CD8-positive, alpha-beta memory T cell (primary cell): ENCODE measurements at regions of chr3 and their contacts with region 1.

Region 1: GRCh38 chr3:128095222-128095703 is 28.3 kb downstream of the RUVBL1 start:
- DNase-seq: peak; percentile 67 to 83 (median 71)
- H3K4me3 ChIP-seq: no peak overlapping the region
- H3K4me3 Mint-ChIP-seq: no peak overlapping the region
- H3K27ac ChIP-seq: no peak overlapping the region
- H3K27ac Mint-ChIP-seq: peak overlapping the region in 5 of 8 donors; percentile 26 to 81 (median 74)
- H3K4me1 ChIP-seq: no peaks in the 10 kb centered on the region
- H3K4me1 Mint-ChIP-seq: peaks cover 5 to 10% (median 9%) of the 10 kb centered on the region in 3 donors
- H3K27me3 ChIP-seq: no peaks in the 10 kb centered on the region
- H3K27me3 Mint-ChIP-seq: no peaks in the 10 kb centered on the region

Region 2: GRCh38 chr3:128112357-128112968 is 17.2 kb after region 1 on chr3:
- CTCF ChIA-PET with region 1: interaction called, 15 read pairs
- POLR2A ChIA-PET with region 1: interaction called, 3 read pairs
- DNase-seq: peak; percentile 23 to 70 (median 49)
- H3K4me3 ChIP-seq: no peak overlapping the region
- H3K4me3 Mint-ChIP-seq: peak overlapping the region; percentile 31 to 88 (median 72)
- H3K27ac ChIP-seq: peak overlapping the region; percentile 60
- H3K27ac Mint-ChIP-seq: peak overlapping the region; percentile 92 to 99 (median 97)
- H3K4me1 ChIP-seq: peaks cover 33% of the 10 kb centered on the region
- H3K4me1 Mint-ChIP-seq: peaks cover 40 to 54% (median 52%) of the 10 kb centered on the region in 3 donors
- H3K27me3 ChIP-seq: no peaks in the 10 kb centered on the region
- H3K27me3 Mint-ChIP-seq: no peaks in the 10 kb centered on the region

Region 3: DNA sequence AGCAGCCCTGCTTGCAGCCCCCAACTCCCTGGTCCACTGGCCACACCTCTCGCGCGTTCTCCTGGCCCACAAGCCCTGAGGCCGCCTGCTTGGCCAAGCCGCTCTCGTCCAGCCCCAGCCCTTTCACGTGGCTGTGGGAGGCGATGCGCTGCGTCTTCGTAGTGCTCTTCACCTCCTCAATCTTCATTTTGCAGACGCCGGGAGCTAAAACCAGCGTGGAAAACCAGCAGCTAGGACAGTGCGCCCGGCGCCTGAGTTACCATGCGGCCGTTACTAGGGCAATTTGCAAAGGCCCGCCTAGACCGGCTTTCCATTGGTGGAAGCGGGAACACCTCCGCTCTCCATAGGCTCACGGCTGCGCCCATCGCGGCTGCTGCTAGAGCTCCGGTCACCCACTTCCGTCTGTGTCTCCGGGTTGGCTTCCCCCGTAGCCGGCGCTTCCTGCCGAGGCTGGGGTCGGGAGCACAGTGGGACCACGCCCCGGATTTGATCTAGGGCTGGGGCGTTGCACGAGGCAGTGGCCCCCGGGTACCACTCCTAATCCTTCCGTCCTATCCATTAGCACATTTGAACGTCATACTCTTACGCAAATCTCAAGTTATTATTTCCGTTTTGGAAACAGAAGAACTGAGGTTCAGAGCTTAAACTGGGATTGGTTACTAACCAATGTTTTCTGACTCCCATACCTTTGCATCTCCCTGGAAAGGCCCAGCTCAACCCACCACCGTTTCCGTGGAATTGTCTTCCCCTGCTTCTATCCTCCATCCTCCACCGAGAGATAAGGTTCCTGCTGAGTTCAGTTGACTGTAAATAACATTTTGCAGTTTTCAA is 28.5 kb after region 1 on chr3 and contains the start of gene RUVBL1:
- CTCF ChIA-PET with region 1: interaction called, 15 read pairs
- POLR2A ChIA-PET with region 1: no interaction called
- DNase-seq: peak; percentile 95 to 98 (median 97)
- H3K4me3 ChIP-seq: peak within 1 kb of the TSS; percentile 86
- H3K4me3 Mint-ChIP-seq: peak within 1 kb of the TSS; percentile 94 to 99 (median 97)
- H3K27ac ChIP-seq: peak within 1 kb of the TSS; percentile 75
- H3K27ac Mint-ChIP-seq: peak within 1 kb of the TSS; percentile 83 to 99 (median 96)
- H3K4me1 ChIP-seq: peaks cover 19% of the 10 kb centered on the region
- H3K4me1 Mint-ChIP-seq: peaks cover 23 to 41% (median 36%) of the 10 kb centered on the region in 3 donors
- H3K27me3 ChIP-seq: no peaks in the 10 kb centered on the region
- H3K27me3 Mint-ChIP-seq: no peaks in the 10 kb centered on the region
- total RNA-seq, gene RUVBL1: 114 to 116 TPM

Region 4: GRCh38 chr3:128133273-128134084 is 38.2 kb after region 1 on chr3:
- CTCF ChIA-PET with region 1: interaction called, 107 read pairs
- POLR2A ChIA-PET with region 1: interaction called, 4 read pairs
- DNase-seq: peak; percentile 33 to 66 (median 46)
- H3K4me3 ChIP-seq: no peak overlapping the region
- H3K4me3 Mint-ChIP-seq: no peak overlapping the region
- H3K27ac ChIP-seq: no peak overlapping the region
- H3K27ac Mint-ChIP-seq: peak overlapping the region in 1 of 8 donors; percentile 58
- H3K4me1 ChIP-seq: no peaks in the 10 kb centered on the region
- H3K4me1 Mint-ChIP-seq: no peaks in the 10 kb centered on the region
- H3K27me3 ChIP-seq: no peaks in the 10 kb centered on the region
- H3K27me3 Mint-ChIP-seq: peaks cover 2 to 4% of the 10 kb centered on the region in 2 donors

Region 5: DNA sequence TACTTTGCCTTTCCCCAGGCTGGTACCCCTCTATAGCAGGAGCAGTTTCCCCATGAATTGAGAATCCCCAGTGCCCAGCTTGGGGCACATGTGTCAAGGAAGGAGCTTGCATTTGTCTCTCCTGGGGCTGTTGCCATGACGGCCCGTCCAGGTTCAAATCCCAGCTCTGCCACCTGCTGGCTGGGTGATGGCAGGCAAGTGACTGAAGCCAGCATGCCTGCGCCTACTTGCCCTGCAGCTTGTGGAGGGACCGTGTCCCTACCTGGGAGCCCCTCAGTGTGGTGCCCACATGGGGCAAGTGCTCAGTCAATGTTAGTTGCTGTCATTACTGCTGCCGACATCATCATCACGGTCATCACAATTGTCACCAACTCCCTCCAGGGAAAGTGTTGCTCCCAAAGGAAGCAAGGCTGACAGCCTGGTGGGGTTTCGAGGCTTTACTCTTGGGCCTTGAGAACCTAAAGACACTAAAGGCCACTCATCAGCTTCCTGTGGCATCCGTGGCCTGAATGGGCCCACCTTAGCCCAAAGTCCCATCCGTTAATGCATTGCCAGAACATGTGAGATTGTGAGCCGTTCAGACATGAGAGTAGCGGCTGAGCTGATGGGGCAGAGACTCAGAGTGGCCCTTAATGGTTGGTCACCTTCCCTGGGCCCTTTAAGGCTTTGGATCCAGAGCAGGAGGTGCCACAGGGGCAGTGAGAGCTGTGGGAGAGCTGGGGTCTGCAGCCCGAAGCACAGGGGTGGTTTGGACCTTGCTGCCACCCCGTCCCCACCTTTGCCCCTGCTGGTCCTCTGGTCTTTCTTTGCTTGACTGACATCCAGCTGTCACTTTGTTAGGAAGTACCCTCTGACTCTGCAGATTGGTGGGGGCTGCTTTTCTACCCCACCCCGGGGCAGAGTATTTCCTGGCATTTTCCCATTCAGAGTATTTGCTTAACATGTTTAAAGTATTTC is 227.1 kb after region 1 on chr3:
- CTCF ChIA-PET with region 1: interaction called, 15 read pairs
- POLR2A ChIA-PET with region 1: interaction called, 3 read pairs
- DNase-seq: peak; percentile 15 to 70 (median 30)
- H3K4me3 ChIP-seq: no peak overlapping the region
- H3K4me3 Mint-ChIP-seq: no peak overlapping the region
- H3K27ac ChIP-seq: no peak overlapping the region
- H3K27ac Mint-ChIP-seq: no peak overlapping the region
- H3K4me1 ChIP-seq: peaks cover 57% of the 10 kb centered on the region
- H3K4me1 Mint-ChIP-seq: peaks cover 7 to 26% (median 17%) of the 10 kb centered on the region in 3 donors
- H3K27me3 ChIP-seq: no peaks in the 10 kb centered on the region
- H3K27me3 Mint-ChIP-seq: no peaks in the 10 kb centered on the region

Region 6: DNA sequence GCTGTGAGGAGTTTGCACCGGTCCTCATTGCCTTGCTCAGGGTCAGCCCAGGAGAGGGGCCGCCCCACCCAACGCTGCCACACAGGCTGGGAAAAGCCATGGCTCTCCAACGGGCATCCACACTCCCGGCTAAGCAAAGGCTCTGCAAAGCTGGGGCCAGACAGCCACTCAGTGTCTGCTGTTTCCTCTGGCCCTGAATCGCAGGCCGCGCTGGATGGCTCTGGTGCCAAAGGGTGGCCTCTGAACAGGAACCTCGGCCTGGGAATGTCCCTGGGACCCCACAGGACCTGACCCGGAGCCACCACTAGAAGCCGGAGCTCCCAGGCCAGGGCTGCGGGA is 512.4 kb after region 1 on chr3:
- CTCF ChIA-PET with region 1: interaction called, 15 read pairs
- POLR2A ChIA-PET with region 1: no interaction called
- DNase-seq: no peak
- H3K4me3 ChIP-seq: peak overlapping the region; percentile 61
- H3K4me3 Mint-ChIP-seq: peak overlapping the region in 4 of 7 donors; percentile 5 to 43 (median 24)
- H3K27ac ChIP-seq: no peak overlapping the region
- H3K27ac Mint-ChIP-seq: no peak overlapping the region
- H3K4me1 ChIP-seq: no peaks in the 10 kb centered on the region
- H3K4me1 Mint-ChIP-seq: peaks cover 0 to 2% (median 0%) of the 10 kb centered on the region in 3 donors
- H3K27me3 ChIP-seq: no peaks in the 10 kb centered on the region
- H3K27me3 Mint-ChIP-seq: peaks cover 0 to 5% of the 10 kb centered on the region in 2 donors